ENCODE measurements at regions of chr1 and their contacts with region 1.

Region 1: GRCh38 chr1:5620990-5621389 is 371.2 kb downstream of the NPHP4 start:
- DNase-seq: peak; percentile 43
- H3K4me3 Mint-ChIP-seq: no peak overlapping the region
- H3K27ac Mint-ChIP-seq: no peak overlapping the region
- H3K4me1 Mint-ChIP-seq: peaks cover 24% of the 10 kb centered on the region
- H3K27me3 Mint-ChIP-seq: peaks cover 15% of the 10 kb centered on the region
- CTCF ChIP-seq: peak; percentile 46

Region 2: DNA sequence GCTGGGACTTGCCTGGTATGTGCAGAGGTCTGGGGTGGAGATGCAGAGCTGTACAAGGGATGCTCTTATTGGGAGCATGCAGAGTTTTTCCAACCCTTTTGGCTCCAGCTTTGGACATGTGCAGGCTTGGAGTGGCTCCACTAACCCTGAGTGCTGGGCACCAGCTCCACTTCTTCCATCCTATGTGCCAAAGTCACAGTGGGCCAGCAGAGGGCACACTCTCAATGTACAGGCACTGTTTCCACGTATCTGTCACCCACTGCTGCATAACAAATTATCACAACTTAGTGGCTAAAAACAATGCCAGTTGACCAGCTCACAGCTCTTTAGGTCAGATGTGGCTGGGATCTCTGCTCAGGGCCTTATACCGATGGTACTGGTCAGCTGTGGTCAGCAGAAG is 334.7 kb before region 1 on chr1:
- CTCF ChIA-PET with region 1: no interaction called
- POLR2A ChIA-PET with region 1: no interaction called
- intact Hi-C with region 1: loop called (anchors 5 kb)
- DNase-seq: no peak
- H3K4me3 Mint-ChIP-seq: no peak overlapping the region
- H3K27ac Mint-ChIP-seq: no peak overlapping the region
- H3K4me1 Mint-ChIP-seq: no peaks in the 10 kb centered on the region
- H3K27me3 Mint-ChIP-seq: peaks cover 39% of the 10 kb centered on the region
- CTCF ChIP-seq: peak; percentile 30

Region 3: GRCh38 chr1:5574641-5575040 is 46.3 kb before region 1 on chr1:
- CTCF ChIA-PET with region 1: no interaction called
- POLR2A ChIA-PET with region 1: no interaction called
- intact Hi-C with region 1: no loop called
- DNase-seq: no peak
- H3K4me3 Mint-ChIP-seq: no peak overlapping the region
- H3K27ac Mint-ChIP-seq: no peak overlapping the region
- H3K4me1 Mint-ChIP-seq: no peaks in the 10 kb centered on the region
- H3K27me3 Mint-ChIP-seq: peaks cover 54% of the 10 kb centered on the region
- CTCF ChIP-seq: no peak